HepG2 (cell line): ENCODE measurements at regions of chr9 and their contacts with region 1.

Region 1: GRCh38 chr9:121322037-121322775 is 47.8 kb downstream of the STOM start:
- DNase-seq: peak; percentile 99
- ATAC-seq: peak; percentile 79
- H3K4me3 ChIP-seq: no peak overlapping the region; a peak in 1 of 6 replicates
- H3K27ac ChIP-seq: peak overlapping the region; percentile 86
- H3K4me1 ChIP-seq: peaks cover 65% of the 10 kb centered on the region
- H3K27me3 ChIP-seq: no peaks in the 10 kb centered on the region
- CTCF ChIP-seq: no peak
- EP300 ChIP-seq: peak; percentile 81 to 97; a peak in 3 of 4 replicates
- POLR2A ChIP-seq: peak; percentile 26 to 62; a peak in 1 of 4 replicates
- RAD21 ChIP-seq: no peak

Region 2: GRCh38 chr9:121278535-121279261 is 43.5 kb before region 1 on chr9:
- CTCF ChIA-PET with region 1: interaction called, 20 read pairs
- POLR2A ChIA-PET with region 1: interaction called, 8 read pairs
- in situ Hi-C with region 1: no loop called
- intact Hi-C with region 1: loop called (anchors 5 kb)
- DNase-seq: no peak
- ATAC-seq: peak; percentile 63
- H3K4me3 ChIP-seq: no peak overlapping the region
- H3K27ac ChIP-seq: no peak overlapping the region
- H3K4me1 ChIP-seq: peaks cover 58% of the 10 kb centered on the region
- H3K27me3 ChIP-seq: no peaks in the 10 kb centered on the region; a peak in 1 of 5 replicates
- CTCF ChIP-seq: peak; percentile 91
- EP300 ChIP-seq: no peak
- POLR2A ChIP-seq: no peak
- RAD21 ChIP-seq: peak; percentile 82

Region 3: DNA sequence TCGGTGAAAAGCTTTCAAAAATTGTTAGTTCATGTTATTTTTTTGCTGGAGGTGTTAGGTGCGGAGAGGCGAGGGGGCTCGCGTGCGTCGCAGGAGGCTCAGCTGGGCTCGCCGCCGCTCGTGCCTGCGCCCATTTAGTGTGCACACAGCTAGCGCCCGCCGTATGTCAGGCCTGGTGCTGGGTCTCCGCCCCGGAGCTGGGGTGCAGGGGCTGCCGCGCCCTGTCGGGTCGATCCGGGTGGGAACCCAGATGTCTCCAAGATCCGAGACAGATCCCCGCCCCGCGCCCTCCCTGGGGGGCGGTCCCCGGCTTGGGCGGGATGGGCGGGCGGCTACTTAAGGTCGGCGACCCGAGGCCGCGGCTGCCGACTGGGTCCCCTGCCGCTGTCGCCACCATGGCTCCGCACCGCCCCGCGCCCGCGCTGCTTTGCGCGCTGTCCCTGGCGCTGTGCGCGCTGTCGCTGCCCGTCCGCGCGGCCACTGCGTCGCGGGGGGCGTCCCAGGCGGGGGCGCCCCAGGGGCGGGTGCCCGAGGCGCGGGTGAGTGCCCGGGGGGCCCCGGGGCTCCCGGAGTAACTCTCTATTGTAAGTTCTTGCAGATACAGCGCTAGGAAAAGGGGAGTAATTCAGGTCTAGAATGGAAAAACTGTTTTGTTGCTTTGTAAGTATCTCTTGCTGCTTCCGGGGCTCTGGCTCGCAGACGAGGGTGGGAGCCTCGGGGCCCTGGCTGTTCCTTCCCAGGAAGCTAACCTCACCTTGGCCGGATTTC is 22.6 kb before region 1 on chr9:
- CTCF ChIA-PET with region 1: interaction called, 4 read pairs
- POLR2A ChIA-PET with region 1: interaction called, 15 read pairs
- in situ Hi-C with region 1: no loop called
- intact Hi-C with region 1: no loop called
- DNase-seq: no peak
- ATAC-seq: peak; percentile 49
- H3K4me3 ChIP-seq: peak overlapping the region; percentile 67 to 80 (median 76)
- H3K27ac ChIP-seq: peak overlapping the region; percentile 94
- H3K4me1 ChIP-seq: peaks cover 93% of the 10 kb centered on the region
- H3K27me3 ChIP-seq: no peaks in the 10 kb centered on the region
- CTCF ChIP-seq: peak; percentile 36; the same call in 1 of the 2 replicates
- EP300 ChIP-seq: no peak
- POLR2A ChIP-seq: peak in 1 of 2 experiments; percentile 40; a peak in 1 of 4 replicates
- RAD21 ChIP-seq: no peak; the same call in none of the 2 replicates

Region 4: DNA sequence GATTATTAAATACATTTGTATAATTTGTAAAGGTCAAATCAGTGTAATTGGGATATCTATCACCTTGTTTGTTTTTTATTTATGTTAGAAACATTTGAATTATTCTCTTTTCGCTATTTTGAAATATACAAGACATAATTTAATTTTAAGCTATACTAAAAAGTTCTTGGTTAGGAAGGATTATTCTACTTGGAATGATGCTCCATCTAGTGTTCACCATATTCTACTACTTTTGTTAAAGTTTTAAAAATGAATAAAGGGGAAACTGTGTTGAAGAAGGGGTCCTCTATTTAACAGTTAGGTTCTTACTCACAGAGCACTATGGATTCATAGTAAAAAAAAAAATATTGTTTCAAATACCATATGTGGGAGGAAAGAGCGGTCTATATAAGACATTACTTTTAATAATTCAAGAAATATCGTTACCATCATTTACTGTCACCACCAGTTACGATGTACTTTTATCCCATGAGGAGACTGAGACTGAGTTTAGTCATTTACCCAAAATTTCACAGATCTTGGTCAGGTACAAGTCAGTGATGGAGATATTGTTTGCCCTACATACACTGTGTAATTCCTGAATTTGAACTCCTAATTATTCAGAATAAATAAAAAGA is 54.1 kb after region 1 on chr9:
- CTCF ChIA-PET with region 1: interaction called, 35 read pairs
- POLR2A ChIA-PET with region 1: interaction called, 6 read pairs
- in situ Hi-C with region 1: loop called (anchors 5 kb)
- intact Hi-C with region 1: loop called (anchors 1 kb)
- DNase-seq: no peak
- ATAC-seq: no peak
- H3K4me3 ChIP-seq: no peak overlapping the region
- H3K27ac ChIP-seq: no peak overlapping the region
- H3K4me1 ChIP-seq: peaks cover 42% of the 10 kb centered on the region
- H3K27me3 ChIP-seq: no peaks in the 10 kb centered on the region
- CTCF ChIP-seq: no peak
- EP300 ChIP-seq: no peak
- POLR2A ChIP-seq: no peak
- RAD21 ChIP-seq: peak; percentile 26; the same call in 1 of the 2 replicates

Region 5: GRCh38 chr9:121439711-121440664 is 117.8 kb after region 1 on chr9:
- CTCF ChIA-PET with region 1: interaction called, 6 read pairs
- POLR2A ChIA-PET with region 1: interaction called, 4 read pairs
- in situ Hi-C with region 1: no loop called
- intact Hi-C with region 1: loop called (anchors 1 kb)
- DNase-seq: peak; percentile 39
- ATAC-seq: peak; percentile 96
- H3K4me3 ChIP-seq: no peak overlapping the region
- H3K27ac ChIP-seq: no peak overlapping the region
- H3K4me1 ChIP-seq: peaks cover 20% of the 10 kb centered on the region
- H3K27me3 ChIP-seq: peaks cover 1 to 14% of the 10 kb centered on the region in 2 experiments; a peak in 3 of 5 replicates
- CTCF ChIP-seq: peak; percentile 54
- EP300 ChIP-seq: no peak
- POLR2A ChIP-seq: no peak
- RAD21 ChIP-seq: no peak